ENCODE measurements at regions of chr2 and their contacts with region 1.

Region 1: GRCh38 chr2:173402405-173402974 is 47.8 kb downstream of the CDCA7 start:
- DNase-seq: peak; percentile 82
- ATAC-seq: peak; percentile 97 to 99

Region 2: GRCh38 chr2:172404824-172405223 is 997.7 kb before region 1 on chr2:
- intact Hi-C with region 1: no loop called
- DNase-seq: no peak
- ATAC-seq: peak; percentile 65 to 83

Region 3: GRCh38 chr2:173446722-173447121 is 44.2 kb after region 1 on chr2:
- intact Hi-C with region 1: loop called in 1 of 2 experiments (anchors 2 kb)
- DNase-seq: no peak
- ATAC-seq: no peak

Region 4: GRCh38 chr2:173568054-173568453 is 165.6 kb after region 1 on chr2:
- intact Hi-C with region 1: loop called in 1 of 2 experiments (anchors 5 kb)
- DNase-seq: no peak
- ATAC-seq: peak in 1 of 2 donors; percentile 22

Region 5: GRCh38 chr2:173752152-173752551 is 349.7 kb after region 1 on chr2:
- intact Hi-C with region 1: no loop called
- DNase-seq: no peak
- ATAC-seq: no peak

Region 6: DNA sequence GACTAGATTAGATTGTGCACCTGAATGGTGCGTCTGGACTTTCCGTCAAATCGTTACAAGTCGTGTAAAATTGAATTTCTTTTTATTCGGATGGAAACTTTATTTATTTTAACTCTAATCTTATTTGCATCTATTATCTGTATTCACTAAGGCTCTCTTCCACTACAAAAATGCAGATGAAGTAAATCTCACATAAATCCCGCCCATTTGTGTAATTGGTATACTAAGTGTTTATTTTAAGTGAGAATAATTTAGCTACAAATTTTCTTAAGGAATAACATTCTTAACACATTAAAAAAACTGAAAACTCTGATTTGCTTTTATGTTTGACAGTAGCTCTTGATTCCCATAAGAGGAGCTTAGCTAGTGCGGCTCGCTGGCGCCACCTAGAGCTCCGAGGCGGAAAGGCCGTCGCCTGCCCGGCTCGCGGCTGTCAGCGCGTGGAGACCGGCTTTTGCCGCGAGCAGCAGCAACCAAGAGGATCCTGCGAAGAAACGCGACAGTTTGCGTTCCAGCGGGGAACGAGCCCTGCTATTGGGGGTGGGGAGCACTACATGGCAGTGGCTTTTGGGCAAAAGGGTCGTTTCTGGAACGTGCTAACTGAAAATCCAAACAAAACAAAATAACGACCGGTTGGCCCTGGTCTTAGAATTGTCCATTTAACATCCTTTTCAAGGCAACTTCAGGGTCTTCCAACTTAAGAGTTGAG is 939.0 kb after region 1 on chr2:
- intact Hi-C with region 1: loop called (anchors 5 to 10 kb)
- DNase-seq: peak; percentile 85
- ATAC-seq: peak; percentile 86 to 88